Mucosa of descending colon (tissue), 3 donors: ENCODE measurements at regions of chr6 and their contacts with region 1.

Region 1: GRCh38 chr6:132279592-132280139 is 121.6 kb downstream of the MOXD1 start:
- DNase-seq: peak; percentile 60 to 80 (median 71)
- ATAC-seq: peak; percentile 93
- H3K4me3 ChIP-seq: no peak overlapping the region
- H3K4me1 ChIP-seq: no peaks in the 10 kb centered on the region
- CTCF ChIP-seq: peak; percentile 59

Region 2: GRCh38 chr6:132456700-132457143 is 177.1 kb after region 1 on chr6:
- intact Hi-C with region 1: loop called in 1 of 2 experiments (anchors 10 kb)
- DNase-seq: peak in 2 of 3 donors; percentile 15 to 24
- ATAC-seq: peak; percentile 33
- H3K4me3 ChIP-seq: no peak overlapping the region
- H3K4me1 ChIP-seq: no peaks in the 10 kb centered on the region
- CTCF ChIP-seq: no peak

Region 3: DNA sequence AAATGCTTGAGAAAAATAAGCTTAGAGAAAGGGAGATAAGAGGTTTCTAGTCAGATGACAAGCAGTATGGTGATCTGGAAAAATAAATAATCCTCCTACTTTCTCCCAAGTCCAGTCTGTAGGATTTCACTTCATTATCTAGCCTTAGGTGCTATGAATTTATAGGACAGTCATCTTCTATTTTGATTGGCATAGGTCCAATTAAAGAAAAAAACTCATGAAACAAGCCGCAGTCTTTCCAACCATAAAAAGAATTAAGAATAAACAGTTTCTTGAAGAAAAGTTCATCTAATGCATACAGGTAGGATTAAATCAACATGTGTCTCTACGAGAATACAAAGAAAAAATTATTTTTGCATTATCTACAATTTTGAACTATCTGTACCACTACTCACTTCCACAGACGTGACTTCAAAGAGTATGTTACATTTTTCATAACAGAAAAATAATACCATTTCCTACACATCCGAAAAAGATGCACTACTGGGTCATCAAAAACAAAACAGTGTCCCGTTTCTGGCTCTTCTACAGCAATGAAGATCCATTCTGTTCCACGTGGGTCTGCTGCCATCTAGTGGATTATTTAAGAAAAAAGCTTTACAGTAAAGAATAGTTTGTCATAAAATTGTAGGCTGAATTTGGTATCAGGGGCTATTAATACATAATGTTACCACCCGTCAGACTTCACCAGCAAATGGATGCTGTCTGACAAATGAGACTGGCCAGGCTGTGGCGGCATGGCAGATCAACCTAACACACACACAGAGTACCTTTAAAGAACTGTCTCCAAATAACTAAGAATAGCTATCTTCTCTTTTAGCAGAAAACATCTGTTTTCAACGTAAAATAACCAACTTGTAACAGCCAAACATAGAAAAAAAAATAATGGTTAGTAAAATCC is 204.4 kb after region 1 on chr6:
- intact Hi-C with region 1: loop called (anchors 10 kb)
- DNase-seq: peak in 1 of 3 donors; percentile 49
- ATAC-seq: peak; percentile 72
- H3K4me3 ChIP-seq: no peak overlapping the region
- H3K4me1 ChIP-seq: no peaks in the 10 kb centered on the region
- CTCF ChIP-seq: peak; percentile 57